Tibial artery (tissue), 4 donors: ENCODE measurements at regions of chr3 and their contacts with region 1.

Region 1: GRCh38 chr3:40196966-40197365 is 112.5 kb upstream of the EIF1B start:
- DNase-seq: no peak
- H3K4me3 ChIP-seq: no peak overlapping the region
- H3K27ac ChIP-seq: no peak overlapping the region
- H3K4me1 ChIP-seq: peaks cover 0 to 14% (median 4%) of the 10 kb centered on the region in 4 donors
- H3K27me3 ChIP-seq: no peaks in the 10 kb centered on the region
- CTCF ChIP-seq: no peak

Region 2: GRCh38 chr3:40143283-40144090 is 53.5 kb before region 1 on chr3:
- intact Hi-C with region 1: loop called (anchors 2 kb)
- DNase-seq: no peak
- H3K4me3 ChIP-seq: no peak overlapping the region
- H3K27ac ChIP-seq: no peak overlapping the region
- H3K4me1 ChIP-seq: peaks cover 0 to 2% (median 0%) of the 10 kb centered on the region in 4 donors
- H3K27me3 ChIP-seq: no peaks in the 10 kb centered on the region
- CTCF ChIP-seq: no peak